Mammary epithelial cell (primary cell): ENCODE measurements at regions of chr15 and their contacts with region 1.

Region 1: GRCh38 chr15:98177924-98178592 is 217.6 kb downstream of the ARRDC4 start:
- DNase-seq: peak; percentile 79
- H3K4me3 ChIP-seq: no peak overlapping the region
- H3K27ac ChIP-seq: no peak overlapping the region
- H3K4me1 ChIP-seq: no peaks in the 10 kb centered on the region
- H3K27me3 ChIP-seq: no peaks in the 10 kb centered on the region
- CTCF ChIP-seq: peak; percentile 87 to 97

Region 2: GRCh38 chr15:96356494-96357455 is 1821.3 kb before region 1 on chr15:
- CTCF ChIA-PET with region 1: no interaction called
- dilution Hi-C with region 1: no loop called
- in situ Hi-C with region 1: no loop called
- intact Hi-C with region 1: loop called (anchors 5 kb)
- DNase-seq: peak; percentile 86
- H3K4me3 ChIP-seq: peak overlapping the region; percentile 61 to 78 (median 73)
- H3K27ac ChIP-seq: peak overlapping the region; percentile 66
- H3K4me1 ChIP-seq: peaks cover 23% of the 10 kb centered on the region
- H3K27me3 ChIP-seq: peaks cover 21% of the 10 kb centered on the region
- CTCF ChIP-seq: peak; percentile 66 to 89

Region 3: DNA sequence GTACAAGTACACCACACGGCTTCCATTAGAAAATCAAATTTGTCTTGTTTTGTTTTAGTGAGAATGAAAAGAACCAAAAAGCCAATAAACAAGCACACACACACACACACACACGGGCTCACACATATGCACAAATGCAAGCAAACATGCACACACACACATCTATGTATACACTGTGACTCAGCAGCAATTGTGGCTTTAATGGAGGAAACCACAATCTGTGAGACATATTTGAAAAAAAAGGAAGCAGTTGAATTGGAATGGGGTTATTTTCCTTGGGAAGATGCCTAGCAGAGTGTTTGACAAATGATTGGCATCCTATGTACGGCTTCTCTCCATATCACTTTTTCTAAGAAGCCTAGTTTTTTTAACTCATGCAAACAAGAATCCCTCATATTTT is 418.7 kb before region 1 on chr15:
- CTCF ChIA-PET with region 1: interaction called, 6 read pairs
- dilution Hi-C with region 1: no loop called
- in situ Hi-C with region 1: no loop called
- intact Hi-C with region 1: loop called (anchors 5 kb)
- DNase-seq: peak; percentile 83
- H3K4me3 ChIP-seq: no peak overlapping the region
- H3K27ac ChIP-seq: no peak overlapping the region
- H3K4me1 ChIP-seq: peaks cover 3% of the 10 kb centered on the region
- H3K27me3 ChIP-seq: no peaks in the 10 kb centered on the region
- CTCF ChIP-seq: no peak

Region 4: DNA sequence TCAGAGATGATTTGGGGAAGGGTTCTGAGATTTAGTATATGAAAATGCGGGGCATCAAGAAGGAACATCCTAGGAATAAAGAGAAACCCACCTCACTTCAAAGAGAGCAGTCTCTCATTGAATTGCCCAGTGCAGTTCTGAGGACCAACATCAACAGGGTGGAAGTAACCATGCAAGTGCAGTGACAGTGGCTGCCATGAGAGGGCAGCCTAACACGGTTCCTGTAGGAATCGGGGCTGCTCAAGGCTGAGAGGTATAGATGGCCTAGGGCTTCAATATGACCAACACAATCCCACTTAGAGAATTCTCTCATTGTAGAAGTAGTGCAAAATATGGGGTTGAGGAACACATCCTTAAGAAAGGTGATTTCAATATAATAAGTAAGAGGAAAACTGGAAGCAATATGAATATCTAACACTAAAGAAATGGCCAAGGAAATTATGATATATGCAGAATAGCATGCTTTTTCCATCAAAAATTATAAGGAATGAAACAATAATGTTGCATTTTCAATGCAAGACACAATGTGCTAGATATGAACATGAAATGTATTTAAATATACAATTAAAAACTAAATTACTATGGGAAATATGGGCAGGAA is 268.7 kb before region 1 on chr15:
- CTCF ChIA-PET with region 1: interaction called, 7 read pairs
- dilution Hi-C with region 1: loop called (anchors 10 kb)
- in situ Hi-C with region 1: loop called (anchors 5 kb)
- intact Hi-C with region 1: loop called (anchors 1 kb)
- DNase-seq: peak; percentile 45
- H3K4me3 ChIP-seq: no peak overlapping the region
- H3K27ac ChIP-seq: no peak overlapping the region
- H3K4me1 ChIP-seq: peaks cover 1% of the 10 kb centered on the region
- H3K27me3 ChIP-seq: no peaks in the 10 kb centered on the region
- CTCF ChIP-seq: peak; percentile 96 to 99

Region 5: GRCh38 chr15:98085003-98085639 is 92.9 kb before region 1 on chr15:
- CTCF ChIA-PET with region 1: no interaction called
- dilution Hi-C with region 1: no loop called
- in situ Hi-C with region 1: loop called in 1 of 2 experiments (anchors 10 kb)
- intact Hi-C with region 1: loop called (anchors 1 kb)
- DNase-seq: peak; percentile 51
- H3K4me3 ChIP-seq: no peak overlapping the region
- H3K27ac ChIP-seq: no peak overlapping the region
- H3K4me1 ChIP-seq: no peaks in the 10 kb centered on the region
- H3K27me3 ChIP-seq: no peaks in the 10 kb centered on the region
- CTCF ChIP-seq: peak; percentile 67 to 71

Region 6: DNA sequence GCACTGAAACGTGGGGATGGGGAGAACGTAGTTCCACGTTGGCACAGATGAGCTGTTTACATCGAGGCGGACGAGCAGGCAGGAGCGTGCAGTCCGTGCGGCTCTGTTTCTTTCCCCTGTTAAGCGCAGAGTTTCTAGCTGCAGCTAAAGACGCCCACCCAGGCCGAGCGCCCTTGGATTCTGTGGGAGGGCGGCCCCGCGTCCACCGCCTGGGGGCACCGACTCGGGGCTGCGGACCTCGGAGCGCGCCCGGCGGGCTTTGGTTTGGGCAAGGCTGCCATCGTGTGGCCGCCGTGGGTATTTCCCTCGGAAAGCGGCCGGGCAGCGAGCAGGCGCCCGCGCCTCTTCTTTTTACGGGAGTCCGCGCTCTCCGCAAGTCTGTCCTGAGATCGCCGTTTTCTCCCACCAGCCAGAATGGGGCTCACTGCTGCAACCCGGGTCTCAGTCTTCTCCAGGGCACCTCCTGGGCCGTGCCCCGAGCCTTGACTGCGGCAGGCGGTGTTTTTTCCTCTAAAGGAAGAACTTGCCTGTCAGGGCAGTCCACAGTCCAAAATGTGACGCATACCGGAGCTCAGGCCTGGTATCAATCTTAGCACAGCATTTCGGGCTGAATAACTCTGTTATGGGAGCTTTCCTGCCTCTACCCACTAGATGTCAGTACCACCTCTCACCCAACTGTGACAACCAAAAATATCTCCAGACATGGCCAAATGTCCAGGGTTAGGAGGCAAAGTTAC is 250.4 kb after region 1 on chr15:
- CTCF ChIA-PET with region 1: no interaction called
- dilution Hi-C with region 1: no loop called
- in situ Hi-C with region 1: no loop called
- intact Hi-C with region 1: loop called (anchors 10 kb)
- DNase-seq: peak; percentile 74
- H3K4me3 ChIP-seq: peak overlapping the region; percentile 23 to 56 (median 54)
- H3K27ac ChIP-seq: no peak overlapping the region
- H3K4me1 ChIP-seq: no peaks in the 10 kb centered on the region
- H3K27me3 ChIP-seq: peaks cover 6% of the 10 kb centered on the region
- CTCF ChIP-seq: peak; percentile 46 to 74